ENCODE measurements at regions of chr10 and their contacts with region 1.

Region 1: GRCh38 chr10:69045441-69046300 is 42.2 kb upstream of the SRGN start:
- DNase-seq: peak; percentile 62
- ATAC-seq: peak; percentile 80
- H3K4me3 Mint-ChIP-seq: peak overlapping the region; percentile 43
- H3K27ac Mint-ChIP-seq: peak overlapping the region; percentile 96
- H3K4me1 Mint-ChIP-seq: peaks cover 59% of the 10 kb centered on the region
- H3K27me3 Mint-ChIP-seq: no peaks in the 10 kb centered on the region

Region 2: DNA sequence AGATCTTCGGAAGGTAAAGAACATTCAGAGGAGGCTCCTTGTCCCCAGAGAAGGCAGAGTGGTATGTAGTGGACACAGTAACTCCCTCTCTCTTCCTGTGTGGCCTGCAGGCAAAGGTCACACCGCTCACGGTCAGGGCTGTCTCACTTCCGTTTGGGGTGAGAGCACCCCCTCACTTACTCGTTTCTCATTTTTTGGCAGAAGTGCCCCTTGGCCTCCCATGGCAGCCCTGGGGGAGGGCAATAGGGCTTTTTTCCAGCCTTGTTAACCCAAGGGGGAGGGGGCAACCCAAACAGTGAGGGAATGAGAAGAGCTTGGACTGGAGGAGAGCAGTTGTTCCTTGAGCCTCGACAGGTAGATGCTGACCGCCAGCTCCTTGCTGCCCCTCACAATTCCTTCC is 10.5 kb after region 1 on chr10:
- CTCF ChIA-PET with region 1: interaction called, 3 read pairs
- POLR2A ChIA-PET with region 1: interaction called, 6 read pairs
- intact Hi-C with region 1: loop called (anchors 1 kb)
- DNase-seq: peak; percentile 34
- ATAC-seq: no peak
- H3K4me3 Mint-ChIP-seq: no peak overlapping the region
- H3K27ac Mint-ChIP-seq: peak overlapping the region; percentile 82
- H3K4me1 Mint-ChIP-seq: peaks cover 55% of the 10 kb centered on the region
- H3K27me3 Mint-ChIP-seq: no peaks in the 10 kb centered on the region

Region 3: DNA sequence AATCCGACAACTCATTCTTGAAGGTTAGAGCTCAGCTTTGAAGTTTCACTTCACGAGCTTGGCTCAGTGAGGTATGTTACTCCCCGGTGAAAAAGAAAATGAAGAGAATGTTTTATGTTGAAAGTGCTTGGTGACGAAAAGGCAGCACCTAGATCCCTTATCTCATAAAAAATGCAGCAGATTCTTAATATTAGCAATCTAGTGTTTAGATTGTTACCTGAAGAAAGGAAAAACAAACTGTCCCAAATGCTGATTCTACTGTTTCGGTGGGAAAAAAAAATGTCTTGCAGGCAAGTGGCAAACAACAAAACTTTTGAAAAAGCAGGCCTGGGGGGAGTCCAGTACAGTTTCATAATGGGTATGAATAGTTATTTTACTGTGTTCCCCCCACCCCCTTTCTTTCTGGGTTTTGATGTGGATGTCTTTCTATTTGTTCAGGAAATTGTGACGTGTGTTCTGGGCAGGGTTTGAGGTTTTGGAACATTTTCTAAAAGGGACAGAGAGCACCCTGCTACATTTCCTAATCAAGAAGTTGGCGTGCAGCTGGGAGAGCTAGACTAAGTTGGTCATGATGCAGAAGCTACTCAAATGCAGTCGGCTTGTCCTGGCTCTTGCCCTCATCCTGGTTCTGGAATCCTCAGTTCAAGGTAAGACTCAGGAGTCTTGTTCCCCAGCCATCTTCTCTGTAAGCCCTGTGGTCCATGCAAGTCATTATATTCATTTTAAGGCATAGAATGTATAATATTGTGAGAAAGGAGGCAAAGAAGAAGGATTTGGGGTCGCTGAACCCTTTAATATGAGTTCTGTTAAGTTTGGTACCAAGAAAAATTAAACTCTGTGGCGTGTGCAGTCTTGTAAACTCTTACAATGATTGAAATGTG is 42.2 kb after region 1 on chr10 and contains the start of gene SRGN:
- CTCF ChIA-PET with region 1: interaction called, 22 read pairs
- POLR2A ChIA-PET with region 1: interaction called, 25 read pairs
- intact Hi-C with region 1: loop called (anchors 1 kb)
- DNase-seq: peak; percentile 87
- ATAC-seq: peak; percentile 57
- H3K4me3 Mint-ChIP-seq: peak within 1 kb of the TSS; percentile 86
- H3K27ac Mint-ChIP-seq: peak within 1 kb of the TSS; percentile 99
- H3K4me1 Mint-ChIP-seq: peaks cover 55% of the 10 kb centered on the region
- H3K27me3 Mint-ChIP-seq: no peaks in the 10 kb centered on the region
- total RNA-seq, gene SRGN: 375 to 400 TPM

Region 4: GRCh38 chr10:69215405-69216176 is 169.9 kb after region 1 on chr10:
- CTCF ChIA-PET with region 1: no interaction called
- POLR2A ChIA-PET with region 1: no interaction called
- intact Hi-C with region 1: loop called in 1 of 2 experiments (anchors 2 kb)
- DNase-seq: peak; percentile 72
- ATAC-seq: peak; percentile 80
- H3K4me3 Mint-ChIP-seq: peak overlapping the region; percentile 15
- H3K27ac Mint-ChIP-seq: peak overlapping the region; percentile 81
- H3K4me1 Mint-ChIP-seq: peaks cover 36% of the 10 kb centered on the region
- H3K27me3 Mint-ChIP-seq: no peaks in the 10 kb centered on the region